ENCODE measurements at regions of chr11 and their contacts with region 1.

Region 1: DNA sequence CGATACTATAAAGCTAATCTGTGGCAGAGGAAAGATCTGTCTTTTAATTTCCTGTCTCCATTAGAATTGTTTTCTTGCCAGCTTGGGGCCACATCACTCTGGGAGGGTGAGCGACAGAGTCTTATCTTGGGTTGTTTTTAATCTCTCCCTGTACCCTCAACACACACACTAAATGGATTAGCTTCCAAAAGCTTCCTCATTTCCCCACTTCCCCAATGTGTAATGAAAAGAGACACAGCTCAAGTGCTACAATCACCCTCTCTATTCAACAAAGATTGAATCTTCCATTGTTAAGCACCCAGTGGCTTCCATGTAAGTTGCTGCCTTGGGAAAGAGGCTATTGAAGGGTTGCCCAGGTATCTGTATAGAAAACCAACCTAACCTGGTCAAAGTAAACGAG is 6.1 kb upstream of the ASCL3 start:
- DNase-seq: no peak
- H3K4me3 ChIP-seq: no peak overlapping the region
- CTCF ChIP-seq: no peak

Region 2: DNA sequence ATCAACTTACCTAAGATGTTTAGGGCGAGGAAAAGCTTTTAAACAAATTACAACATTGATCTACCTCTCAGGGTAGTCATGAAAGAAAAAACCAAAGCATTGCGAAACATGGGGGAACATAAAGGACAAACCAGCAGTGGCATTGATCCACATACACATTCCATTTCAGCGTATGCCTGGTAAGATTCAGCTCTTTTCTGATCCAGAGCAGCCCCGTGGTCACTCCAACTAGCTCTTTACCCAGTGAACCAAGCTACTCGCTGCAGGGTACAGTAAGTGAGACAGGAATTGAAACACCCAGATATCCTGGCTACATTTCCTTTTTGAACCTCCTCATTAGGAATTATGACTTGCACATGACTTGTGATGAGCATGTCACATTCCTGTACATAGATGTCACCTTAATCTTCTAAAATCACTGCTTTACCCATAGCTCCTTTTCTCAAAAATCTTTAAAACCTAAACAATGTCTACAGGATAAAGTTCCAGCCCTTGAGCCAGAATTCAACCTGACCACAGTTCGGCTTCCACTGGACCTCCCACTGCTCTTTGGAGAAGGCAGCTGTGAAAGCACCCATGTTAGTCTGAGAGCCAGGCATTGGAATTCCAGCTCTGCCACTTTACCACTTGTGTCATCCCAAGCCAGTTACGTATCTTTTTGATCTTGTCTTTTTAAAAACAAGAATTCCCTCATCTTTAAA is 80.8 kb before region 1 on chr11:
- in situ Hi-C with region 1: loop called (anchors 5 kb)
- DNase-seq: peak; percentile 74
- H3K4me3 ChIP-seq: no peak overlapping the region
- CTCF ChIP-seq: no peak

Region 3: DNA sequence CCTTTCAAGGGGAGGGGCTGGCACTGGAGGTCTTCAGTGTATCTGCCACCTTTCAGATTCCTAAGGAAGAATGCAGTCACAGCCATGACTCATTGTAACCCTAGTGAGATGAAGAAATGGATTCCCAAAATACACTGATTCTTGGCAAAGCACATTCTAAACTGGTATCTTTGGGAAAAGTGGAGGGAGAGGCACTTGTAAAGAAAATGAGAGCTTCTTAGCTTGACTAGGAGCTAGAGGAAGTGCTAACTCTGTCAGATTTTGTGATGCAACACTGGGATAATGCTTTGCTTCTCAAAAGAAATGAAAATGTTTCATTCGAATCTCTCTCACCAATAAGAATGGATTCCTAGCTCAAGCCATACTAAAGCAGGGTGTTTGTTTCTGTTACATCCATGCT is 40.6 kb after region 1 on chr11:
- in situ Hi-C with region 1: no loop called
- DNase-seq: no peak
- H3K4me3 ChIP-seq: no peak overlapping the region
- CTCF ChIP-seq: no peak

Measured in astrocyte of the cerebellum (primary cell).